Activated naive CD4-positive, alpha-beta T cell treated with anti-CD3 and anti-CD28 coated beads for 36 hours (primary cell): ENCODE measurements at regions of chr4 and their contacts with region 1.

Region 1: DNA sequence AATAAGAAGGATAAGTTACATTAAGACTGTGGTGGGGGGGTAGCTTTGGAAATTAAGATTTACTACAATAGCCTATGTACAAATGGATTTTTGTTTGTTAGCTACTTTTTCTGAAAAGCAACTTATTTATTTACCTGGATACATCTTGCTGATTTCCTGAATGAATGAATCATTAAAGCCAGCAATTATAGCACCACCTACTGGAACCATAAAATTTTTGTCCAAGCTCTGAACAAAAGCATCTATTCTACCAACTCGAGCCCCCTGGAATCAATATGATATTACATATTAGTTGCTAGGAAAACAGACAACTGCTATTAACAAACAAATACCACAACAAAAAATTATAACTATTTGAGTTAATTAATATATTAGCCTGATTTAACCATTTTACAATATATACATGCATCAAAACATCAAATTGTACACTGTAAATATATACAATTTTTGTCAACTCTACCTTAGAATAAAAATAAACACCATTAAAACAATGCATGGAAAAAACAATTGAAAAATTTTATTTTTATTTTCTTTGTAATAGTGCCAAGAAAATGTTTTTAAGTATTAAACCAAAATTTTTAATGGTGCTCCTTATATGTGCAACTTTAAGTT is 15.3 kb downstream of the SEPSECS start:
- DNase-seq: no peak
- H3K4me3 Mint-ChIP-seq: no peak overlapping the region
- H3K27ac Mint-ChIP-seq: no peak overlapping the region
- H3K4me1 Mint-ChIP-seq: no peaks in the 10 kb centered on the region
- H3K27me3 Mint-ChIP-seq: no peaks in the 10 kb centered on the region

Region 2: GRCh38 chr4:25131926-25132325 is 13.1 kb before region 1 on chr4:
- CTCF ChIA-PET with region 1: interaction called, 13 read pairs
- intact Hi-C with region 1: no loop called
- DNase-seq: no peak
- H3K4me3 Mint-ChIP-seq: no peak overlapping the region
- H3K27ac Mint-ChIP-seq: no peak overlapping the region
- H3K4me1 Mint-ChIP-seq: peaks cover 6% of the 10 kb centered on the region
- H3K27me3 Mint-ChIP-seq: no peaks in the 10 kb centered on the region

Region 3: DNA sequence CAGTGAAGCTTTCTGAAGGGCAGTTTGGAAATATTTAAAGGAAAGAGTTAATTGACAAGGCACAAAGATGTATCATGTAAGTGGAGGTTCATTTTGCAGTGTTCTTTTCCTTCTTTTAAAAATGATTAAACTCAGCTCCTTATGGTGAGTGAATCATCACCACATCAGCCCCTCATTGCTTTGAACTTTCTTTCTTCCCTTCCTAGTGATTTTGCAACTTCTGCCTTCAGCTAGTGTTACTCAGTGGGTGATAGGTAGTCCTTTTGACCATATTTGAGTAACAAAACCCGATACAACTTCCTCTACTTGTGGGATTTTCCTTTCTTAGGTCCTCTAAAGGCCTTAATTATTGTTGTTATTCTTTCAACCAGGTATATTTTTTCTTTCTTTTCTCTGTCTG is 175.8 kb after region 1 on chr4:
- CTCF ChIA-PET with region 1: no interaction called
- intact Hi-C with region 1: no loop called
- DNase-seq: peak; percentile 18
- H3K4me3 Mint-ChIP-seq: peak overlapping the region; percentile 42
- H3K27ac Mint-ChIP-seq: peak overlapping the region; percentile 76
- H3K4me1 Mint-ChIP-seq: peaks cover 35% of the 10 kb centered on the region
- H3K27me3 Mint-ChIP-seq: no peaks in the 10 kb centered on the region

Region 4: GRCh38 chr4:25953740-25954139 is 808.8 kb after region 1 on chr4:
- CTCF ChIA-PET with region 1: no interaction called
- intact Hi-C with region 1: no loop called
- DNase-seq: no peak
- H3K4me3 Mint-ChIP-seq: no peak overlapping the region
- H3K27ac Mint-ChIP-seq: no peak overlapping the region
- H3K4me1 Mint-ChIP-seq: peaks cover 12% of the 10 kb centered on the region
- H3K27me3 Mint-ChIP-seq: peaks cover 22% of the 10 kb centered on the region